CD8-positive, alpha-beta T cell (primary cell): ENCODE measurements at regions of chr9 and their contacts with region 1.

Region 1: DNA sequence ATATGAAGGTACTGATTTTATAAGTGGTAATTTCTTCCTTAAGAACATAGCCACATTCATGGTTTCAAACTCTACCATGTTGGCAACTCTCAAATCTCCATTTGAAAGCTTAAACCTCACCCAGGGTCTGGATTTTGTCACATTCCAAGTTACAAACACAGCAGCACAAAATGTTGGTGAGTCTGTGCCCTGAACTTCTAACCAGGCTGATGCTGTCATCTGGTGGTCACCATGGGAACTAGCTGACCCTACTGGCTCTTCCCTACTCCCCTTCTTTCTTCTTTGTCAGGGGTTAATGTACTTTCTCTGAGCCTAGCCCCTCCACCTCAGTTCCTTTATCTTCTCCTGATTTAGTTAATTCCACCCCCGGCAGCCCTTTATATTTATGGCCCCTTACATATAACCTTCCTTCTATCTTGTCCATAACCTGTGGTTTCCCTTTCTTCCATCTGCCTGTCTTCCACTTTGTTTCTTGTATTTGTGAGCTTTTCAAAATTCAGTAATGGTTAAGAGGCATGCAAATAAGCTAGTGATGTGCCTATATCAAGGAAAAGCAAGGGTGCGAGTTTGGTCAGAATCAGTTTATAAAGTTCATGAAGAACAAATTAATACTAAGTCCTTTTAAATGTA is 35.9 kb downstream of the TGFBR1 start:
- DNase-seq: peak in 8 of 9 experiments; percentile 23 to 80 (median 56)
- ATAC-seq: peak; percentile 91
- H3K4me3 ChIP-seq: no peak overlapping the region
- H3K4me3 Mint-ChIP-seq: no peak overlapping the region
- H3K27ac ChIP-seq: peak overlapping the region in 1 of 2 experiments; percentile 7
- H3K27ac Mint-ChIP-seq: peak overlapping the region; percentile 52
- H3K4me1 ChIP-seq: peaks cover 29% of the 10 kb centered on the region
- H3K4me1 Mint-ChIP-seq: peaks cover 52% of the 10 kb centered on the region
- H3K27me3 ChIP-seq: no peaks in the 10 kb centered on the region
- H3K27me3 Mint-ChIP-seq: no peaks in the 10 kb centered on the region
- CTCF ChIP-seq: peak; percentile 89

Region 2: DNA sequence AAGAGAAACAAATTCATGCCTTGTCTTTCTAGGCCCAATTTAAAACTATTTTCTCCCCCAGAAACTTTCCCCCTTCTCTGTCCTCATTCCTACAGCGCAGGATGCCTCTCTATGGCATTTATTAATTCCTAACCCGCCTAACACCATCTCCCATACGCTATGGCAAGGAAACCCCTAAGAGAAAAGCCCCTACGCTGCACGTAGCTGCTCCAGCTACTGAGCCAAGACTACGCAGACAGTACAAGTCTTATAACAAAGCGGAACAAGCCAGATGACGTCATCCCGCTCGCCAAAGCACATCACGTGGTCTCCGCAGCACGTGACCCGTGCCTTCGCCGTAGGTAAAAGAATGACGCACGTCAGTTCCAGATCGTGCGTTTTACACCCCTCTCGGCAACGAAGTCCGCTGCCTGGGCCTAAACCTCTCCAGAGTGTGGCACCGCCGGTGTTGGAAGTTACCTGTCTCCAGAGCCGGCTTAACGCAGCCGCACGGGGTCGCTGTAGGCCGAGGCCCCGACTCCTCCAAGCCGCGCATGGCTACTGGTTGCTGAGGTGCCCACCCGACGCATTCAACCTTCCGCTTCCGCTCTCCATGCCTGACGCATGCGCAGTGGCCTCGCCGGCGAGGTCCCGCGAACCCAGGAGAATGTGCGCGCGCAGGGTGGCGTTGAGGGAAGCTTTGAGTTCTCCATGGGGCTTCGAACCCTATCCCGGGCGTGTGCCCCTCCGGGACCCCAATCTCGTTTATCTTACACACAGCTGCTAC is 1218.7 kb before region 1 on chr9 and contains the start of gene TRMO:
- CTCF ChIA-PET with region 1: no interaction called
- POLR2A ChIA-PET with region 1: no interaction called
- intact Hi-C with region 1: no loop called
- DNase-seq: peak; percentile 94 to 100 (median 99)
- ATAC-seq: peak; percentile 83
- H3K4me3 ChIP-seq: peak within 1 kb of the TSS; percentile 70 to 89
- H3K4me3 Mint-ChIP-seq: peak within 1 kb of the TSS; percentile 87
- H3K27ac ChIP-seq: peak within 1 kb of the TSS; percentile 97 to 100
- H3K27ac Mint-ChIP-seq: peak within 1 kb of the TSS; percentile 99
- H3K4me1 ChIP-seq: peaks cover 42% of the 10 kb centered on the region
- H3K4me1 Mint-ChIP-seq: peaks cover 52% of the 10 kb centered on the region
- H3K27me3 ChIP-seq: no peaks in the 10 kb centered on the region
- H3K27me3 Mint-ChIP-seq: no peaks in the 10 kb centered on the region
- CTCF ChIP-seq: peak; percentile 77
- total RNA-seq, gene TRMO: 45.7 to 50.6 TPM

Region 3: DNA sequence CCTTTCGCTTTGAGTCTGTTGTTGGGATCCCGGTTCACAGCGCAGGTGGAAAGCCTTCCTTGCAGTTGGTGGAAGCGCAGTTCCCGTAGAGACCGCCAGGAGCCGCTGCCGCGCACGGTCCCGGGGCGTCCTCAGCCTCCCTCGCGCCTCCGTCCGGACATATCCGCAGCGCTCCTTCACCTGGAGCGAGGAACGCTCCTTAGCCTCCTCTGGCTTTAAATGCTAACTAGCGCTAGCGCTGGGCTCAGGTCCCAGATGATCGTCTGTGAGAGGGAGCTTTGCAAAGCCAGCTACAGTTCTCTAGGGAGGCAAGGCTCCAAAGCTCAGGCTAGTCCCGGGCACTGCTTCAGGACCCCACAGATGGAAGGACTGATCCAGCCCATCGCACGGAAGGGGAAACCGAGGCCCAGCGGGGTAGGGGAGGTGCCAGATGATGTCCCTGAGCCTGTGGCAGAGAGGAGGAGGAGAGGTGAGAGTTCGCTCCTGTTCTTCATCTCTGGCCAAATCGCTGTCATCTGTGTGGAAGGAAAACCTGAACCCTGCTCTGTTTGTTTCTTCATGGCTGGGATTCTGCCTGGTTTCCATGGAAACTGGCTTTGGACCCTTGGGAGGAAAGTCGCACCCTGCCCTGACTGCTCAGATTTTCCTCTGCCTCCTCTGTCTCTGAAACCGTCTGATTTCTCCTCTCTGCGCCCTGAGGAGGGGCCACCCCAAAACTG is 165.6 kb before region 1 on chr9:
- CTCF ChIA-PET with region 1: interaction called, 101 read pairs
- POLR2A ChIA-PET with region 1: no interaction called
- intact Hi-C with region 1: loop called (anchors 1 kb)
- DNase-seq: peak; percentile 66 to 88 (median 81)
- ATAC-seq: peak; percentile 99
- H3K4me3 ChIP-seq: peak overlapping the region; percentile 33
- H3K4me3 Mint-ChIP-seq: peak overlapping the region; percentile 67
- H3K27ac ChIP-seq: no peak overlapping the region
- H3K27ac Mint-ChIP-seq: no peak overlapping the region
- H3K4me1 ChIP-seq: peaks cover 18% of the 10 kb centered on the region
- H3K4me1 Mint-ChIP-seq: peaks cover 6% of the 10 kb centered on the region
- H3K27me3 ChIP-seq: peaks cover 0 to 7% of the 10 kb centered on the region in 2 experiments
- H3K27me3 Mint-ChIP-seq: peaks cover 7% of the 10 kb centered on the region
- CTCF ChIP-seq: peak; percentile 97

Region 4: DNA sequence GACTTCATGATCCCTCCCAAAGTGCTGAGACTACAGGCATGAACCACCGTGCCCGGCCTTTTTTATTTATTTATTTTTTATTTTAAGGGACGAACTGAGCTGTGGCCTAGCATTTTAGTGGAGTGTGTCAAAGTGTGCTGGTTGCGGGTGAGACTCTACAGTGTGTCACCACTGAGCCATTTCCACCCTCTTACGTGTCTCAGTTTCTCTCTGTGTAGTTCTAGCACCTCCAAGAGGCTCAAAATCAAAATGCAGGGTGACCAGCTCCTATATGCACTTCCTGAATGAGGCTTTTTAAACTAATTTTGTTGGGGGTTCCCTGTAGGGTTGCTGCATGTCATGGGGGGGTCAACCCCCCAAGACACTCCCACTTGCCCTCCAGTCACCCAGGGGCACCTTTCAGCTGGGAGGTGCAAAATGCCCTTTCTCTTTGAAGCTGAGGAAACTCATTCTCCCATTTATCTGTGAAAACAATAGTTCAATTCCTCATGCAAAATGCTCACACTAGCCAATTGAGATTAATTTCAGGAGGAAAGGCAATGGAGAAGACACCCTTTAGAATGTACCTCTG is 127.8 kb before region 1 on chr9:
- CTCF ChIA-PET with region 1: interaction called, 56 read pairs
- POLR2A ChIA-PET with region 1: no interaction called
- intact Hi-C with region 1: no loop called
- DNase-seq: peak in 4 of 9 experiments; percentile 25 to 68 (median 52)
- ATAC-seq: peak; percentile 73
- H3K4me3 ChIP-seq: peak overlapping the region in 1 of 2 experiments; percentile 24
- H3K4me3 Mint-ChIP-seq: peak overlapping the region; percentile 74
- H3K27ac ChIP-seq: peak overlapping the region; percentile 35 to 81
- H3K27ac Mint-ChIP-seq: peak overlapping the region; percentile 95
- H3K4me1 ChIP-seq: peaks cover 20% of the 10 kb centered on the region
- H3K4me1 Mint-ChIP-seq: peaks cover 32% of the 10 kb centered on the region
- H3K27me3 ChIP-seq: no peaks in the 10 kb centered on the region
- H3K27me3 Mint-ChIP-seq: no peaks in the 10 kb centered on the region
- CTCF ChIP-seq: peak; percentile 42

Region 5: GRCh38 chr9:99057665-99058625 is 82.9 kb before region 1 on chr9:
- CTCF ChIA-PET with region 1: interaction called, 23 read pairs
- POLR2A ChIA-PET with region 1: interaction called, 11 read pairs
- intact Hi-C with region 1: loop called in 1 of 2 experiments (anchors 1 kb)
- DNase-seq: peak; percentile 41 to 91 (median 79)
- ATAC-seq: peak; percentile 67
- H3K4me3 ChIP-seq: peak overlapping the region; percentile 49
- H3K4me3 Mint-ChIP-seq: peak overlapping the region; percentile 85
- H3K27ac ChIP-seq: peak overlapping the region in 1 of 2 experiments; percentile 78
- H3K27ac Mint-ChIP-seq: peak overlapping the region; percentile 85
- H3K4me1 ChIP-seq: peaks cover 65% of the 10 kb centered on the region
- H3K4me1 Mint-ChIP-seq: peaks cover 85% of the 10 kb centered on the region
- H3K27me3 ChIP-seq: no peaks in the 10 kb centered on the region
- H3K27me3 Mint-ChIP-seq: no peaks in the 10 kb centered on the region
- CTCF ChIP-seq: no peak

Region 6: GRCh38 chr9:99104459-99105151 is 36.2 kb before region 1 on chr9 and contains the start of gene TGFBR1:
- CTCF ChIA-PET with region 1: interaction called, 10 read pairs
- POLR2A ChIA-PET with region 1: interaction called, 47 read pairs
- intact Hi-C with region 1: loop called (anchors 1 to 5 kb)
- DNase-seq: peak; percentile 81 to 96 (median 89)
- ATAC-seq: peak; percentile 81
- H3K4me3 ChIP-seq: peak within 1 kb of the TSS; percentile 68 to 85
- H3K4me3 Mint-ChIP-seq: peak within 1 kb of the TSS; percentile 90
- H3K27ac ChIP-seq: peak within 1 kb of the TSS; percentile 57 to 70
- H3K27ac Mint-ChIP-seq: peak within 1 kb of the TSS; percentile 91
- H3K4me1 ChIP-seq: peaks cover 48% of the 10 kb centered on the region
- H3K4me1 Mint-ChIP-seq: peaks cover 64% of the 10 kb centered on the region
- H3K27me3 ChIP-seq: no peaks in the 10 kb centered on the region
- H3K27me3 Mint-ChIP-seq: no peaks in the 10 kb centered on the region
- CTCF ChIP-seq: no peak
- total RNA-seq, gene TGFBR1: 24.2 to 25.8 TPM

Region 7: GRCh38 chr9:99221621-99222415 is 81.0 kb after region 1 on chr9 and contains the starts of genes ALG2 and SEC61B:
- CTCF ChIA-PET with region 1: no interaction called
- POLR2A ChIA-PET with region 1: no interaction called
- intact Hi-C with region 1: no loop called
- DNase-seq: peak; percentile 87 to 96 (median 94)
- ATAC-seq: peak; percentile 88
- H3K4me3 ChIP-seq: peak within 1 kb of the TSS; percentile 79 to 90
- H3K4me3 Mint-ChIP-seq: peak within 1 kb of the TSS; percentile 99
- H3K27ac ChIP-seq: peak within 1 kb of the TSS; percentile 95 to 99
- H3K27ac Mint-ChIP-seq: peak within 1 kb of the TSS; percentile 100
- H3K4me1 ChIP-seq: peaks cover 30% of the 10 kb centered on the region
- H3K4me1 Mint-ChIP-seq: peaks cover 80% of the 10 kb centered on the region
- H3K27me3 ChIP-seq: no peaks in the 10 kb centered on the region
- H3K27me3 Mint-ChIP-seq: no peaks in the 10 kb centered on the region
- CTCF ChIP-seq: no peak
- total RNA-seq, gene ALG2: 21.0 to 24.7 TPM
- total RNA-seq, gene SEC61B: 107 to 108 TPM